ENCODE measurements at regions of chr19 and their contacts with region 1.

Region 1: GRCh38 chr19:1241417-1242095 is at the start of gene ATP5F1D:
- DNase-seq: peak; percentile 96
- ATAC-seq: peak; percentile 76
- H3K4me3 Mint-ChIP-seq: peak within 1 kb of the TSS; percentile 73
- H3K27ac Mint-ChIP-seq: peak within 1 kb of the TSS; percentile 84
- H3K4me1 Mint-ChIP-seq: peaks cover 35% of the 10 kb centered on the region
- H3K27me3 Mint-ChIP-seq: peaks cover 13% of the 10 kb centered on the region
- total RNA-seq, gene ATP5F1D: 190 to 221 TPM

Region 2: DNA sequence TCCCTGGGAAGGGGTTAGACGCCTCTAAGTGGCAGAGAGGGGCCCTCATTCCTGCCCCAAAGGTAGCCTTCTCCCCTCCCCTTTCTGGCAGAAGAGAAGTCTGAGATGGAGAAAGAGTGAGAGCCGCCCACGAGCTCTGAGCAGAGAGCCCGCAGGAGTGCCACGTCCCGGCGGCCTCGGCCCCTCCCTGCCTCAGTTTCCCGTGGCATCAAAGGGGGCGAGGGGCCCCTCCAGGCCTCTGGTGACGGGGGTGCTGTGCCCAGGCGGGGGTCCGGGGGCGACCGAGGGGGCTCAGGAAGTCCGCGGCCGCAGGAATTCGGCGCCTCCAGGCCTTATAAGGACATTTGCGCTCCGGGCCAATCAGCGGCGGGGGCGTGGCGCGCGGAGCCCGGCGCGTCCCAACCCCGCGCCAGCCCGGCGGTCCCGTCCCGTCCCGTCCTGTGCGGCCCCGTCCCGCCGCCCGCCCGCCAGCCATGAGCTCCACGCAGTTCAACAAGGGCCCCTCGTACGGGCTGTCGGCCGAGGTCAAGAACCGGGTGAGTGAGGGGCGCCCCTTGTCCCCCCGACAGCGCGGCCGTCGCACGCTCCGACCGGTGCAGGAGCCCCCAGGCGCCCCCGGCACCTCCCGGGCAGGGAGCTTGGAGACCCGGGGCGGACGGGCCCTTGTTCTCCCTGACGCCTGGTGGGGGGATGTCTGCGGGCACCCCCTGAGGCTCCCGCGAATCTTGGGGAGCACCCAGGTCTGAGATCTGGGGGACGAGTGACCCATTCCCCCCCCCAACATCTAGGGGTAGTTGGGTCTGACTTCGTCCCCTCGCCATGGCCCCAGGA is 215.2 kb before region 1 on chr19 and contains the start of gene CNN2:
- CTCF ChIA-PET with region 1: interaction called, 10 read pairs
- DNase-seq: peak; percentile 79
- ATAC-seq: peak; percentile 69
- H3K4me3 Mint-ChIP-seq: peak within 1 kb of the TSS; percentile 91
- H3K27ac Mint-ChIP-seq: peak within 1 kb of the TSS; percentile 90
- H3K4me1 Mint-ChIP-seq: peaks cover 29% of the 10 kb centered on the region
- H3K27me3 Mint-ChIP-seq: no peaks in the 10 kb centered on the region
- total RNA-seq, gene CNN2: 295 to 296 TPM

Region 3: DNA sequence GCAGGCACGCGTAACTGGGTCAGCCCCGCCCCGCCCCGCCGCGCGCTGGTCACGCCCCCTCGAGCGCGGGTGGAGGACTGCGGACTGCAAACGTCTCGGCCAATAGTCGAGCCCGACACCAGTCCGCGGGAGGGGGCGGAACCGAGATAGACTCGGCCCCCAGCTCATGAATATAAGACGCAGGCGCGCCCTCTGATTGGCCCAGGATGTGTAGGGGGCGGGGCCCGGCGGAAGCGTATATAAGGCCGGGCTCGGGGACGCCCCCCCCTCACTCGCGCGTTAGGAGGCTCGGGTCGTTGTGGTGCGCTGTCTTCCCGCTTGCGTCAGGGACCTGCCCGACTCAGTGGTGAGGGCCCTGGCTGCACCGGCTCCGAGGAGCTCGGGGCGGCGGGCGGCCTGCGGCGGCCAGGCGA is 27.5 kb after region 1 on chr19 and contains the start of gene CIRBP:
- CTCF ChIA-PET with region 1: interaction called, 723 read pairs
- DNase-seq: peak; percentile 100
- ATAC-seq: peak; percentile 81
- H3K4me3 Mint-ChIP-seq: peak within 1 kb of the TSS; percentile 86
- H3K27ac Mint-ChIP-seq: peak within 1 kb of the TSS; percentile 89
- H3K4me1 Mint-ChIP-seq: peaks cover 70% of the 10 kb centered on the region
- H3K27me3 Mint-ChIP-seq: peaks cover 2% of the 10 kb centered on the region
- total RNA-seq, gene CIRBP: 189 to 210 TPM

Region 4: GRCh38 chr19:1284979-1285736 is 43.6 kb after region 1 on chr19:
- CTCF ChIA-PET with region 1: interaction called, 15 read pairs
- DNase-seq: no peak
- ATAC-seq: no peak
- H3K4me3 Mint-ChIP-seq: no peak overlapping the region
- H3K27ac Mint-ChIP-seq: no peak overlapping the region
- H3K4me1 Mint-ChIP-seq: peaks cover 1% of the 10 kb centered on the region
- H3K27me3 Mint-ChIP-seq: peaks cover 30% of the 10 kb centered on the region

Region 5: DNA sequence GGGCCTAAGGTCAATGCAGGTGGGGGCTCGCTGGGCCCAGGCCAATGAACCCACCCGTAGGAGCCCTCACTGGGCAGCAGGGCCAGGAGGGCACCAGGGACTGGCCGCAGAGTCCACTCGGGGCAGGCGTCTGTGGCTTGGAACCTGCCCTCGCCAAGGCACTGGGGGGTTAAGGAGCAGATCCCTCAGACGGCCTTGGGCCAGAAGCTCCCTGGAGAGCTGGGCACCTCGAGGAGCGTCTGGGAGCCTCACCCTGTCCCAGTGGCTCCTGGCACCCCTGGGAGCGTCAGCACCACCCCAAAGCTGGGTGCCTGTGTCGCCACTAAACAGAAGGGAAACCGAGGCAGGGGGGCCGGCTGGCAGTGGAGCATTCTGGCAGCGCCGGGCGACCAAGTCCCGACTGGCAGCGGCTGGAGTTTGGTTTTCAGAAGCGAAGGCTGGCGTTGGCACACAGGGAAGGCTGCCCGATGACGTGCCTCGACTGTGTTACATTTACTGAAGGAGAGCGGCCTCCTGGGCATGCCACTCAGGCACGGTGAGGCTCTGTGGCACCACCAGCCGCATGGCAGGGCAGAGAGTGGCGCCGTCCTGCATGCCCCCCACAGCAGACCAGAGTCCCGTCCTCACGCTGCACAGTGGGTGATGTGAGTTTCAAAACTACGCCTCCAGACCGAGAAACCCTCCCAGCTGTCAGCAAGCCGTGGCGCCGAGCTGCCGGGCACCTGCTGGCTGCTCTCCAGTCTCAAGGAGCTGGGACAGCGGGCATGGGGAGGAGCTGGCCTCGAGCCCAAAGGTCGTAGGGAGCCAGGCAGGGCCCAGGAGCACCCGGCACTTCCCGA is 335.8 kb after region 1 on chr19:
- CTCF ChIA-PET with region 1: no interaction called
- DNase-seq: no peak
- ATAC-seq: no peak
- H3K4me3 Mint-ChIP-seq: no peak overlapping the region
- H3K27ac Mint-ChIP-seq: no peak overlapping the region
- H3K4me1 Mint-ChIP-seq: peaks cover 1% of the 10 kb centered on the region
- H3K27me3 Mint-ChIP-seq: no peaks in the 10 kb centered on the region

Measured in activated CD8-positive, alpha-beta memory T cell treated with anti-CD3 and anti-CD28 coated beads, Interleukin-2, amount 10 ng/mL, durations not matched to agents 7 days and 5 days (primary cell).